Activated CD4-positive, alpha-beta T cell treated with anti-CD3 and anti-CD28 coated beads, Interleukin-2, amount 10 ng/mL, durations not matched to agents 7 days and 5 days (primary cell): ENCODE measurements at regions of chr7 and their contacts with region 1.

Region 1: DNA sequence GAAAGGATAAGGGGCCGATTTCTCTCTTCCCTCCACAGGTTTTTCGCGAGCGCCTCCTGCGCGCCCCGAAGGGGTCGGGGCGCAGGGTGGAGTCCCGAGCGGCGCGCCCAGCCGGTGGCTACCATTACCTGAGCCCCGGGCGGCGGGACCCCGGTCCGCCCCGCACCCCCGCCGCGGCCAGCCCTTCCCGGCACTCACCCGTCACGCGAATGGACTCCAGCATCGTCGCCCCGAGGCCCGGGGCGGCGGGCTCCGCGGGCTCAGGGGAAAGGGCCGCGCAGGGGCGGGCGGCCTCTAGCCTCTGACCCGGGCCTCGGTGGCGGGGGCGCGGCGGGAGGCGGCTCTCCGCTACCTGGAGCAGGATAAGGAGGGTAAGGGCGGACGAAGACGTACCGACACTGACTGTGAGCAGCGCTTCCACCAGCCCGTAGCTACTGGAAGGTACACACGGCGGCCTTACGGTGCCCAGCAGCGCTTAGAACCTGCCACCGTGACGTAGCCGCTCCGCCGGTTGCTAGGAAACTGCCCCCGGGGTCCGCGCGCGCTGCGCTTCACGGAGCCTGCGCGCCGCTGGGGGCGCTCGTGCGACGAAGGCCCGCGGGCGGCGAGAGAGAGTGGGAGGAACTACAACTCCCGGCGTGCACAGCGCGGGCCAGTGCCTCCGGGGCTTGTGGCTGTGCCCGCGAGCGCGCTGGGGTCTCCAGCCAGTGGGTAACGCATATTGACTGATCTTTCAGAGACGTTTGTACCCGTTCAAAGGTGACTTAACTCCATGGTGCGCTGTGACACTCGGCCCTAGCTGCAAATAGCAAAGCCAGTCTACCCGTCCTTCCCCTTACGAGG is 22.7 kb upstream of the ANLN start:
- DNase-seq: peak; percentile 91
- H3K4me3 Mint-ChIP-seq: peak overlapping the region; percentile 92
- H3K27ac Mint-ChIP-seq: peak overlapping the region; percentile 78
- H3K4me1 Mint-ChIP-seq: peaks cover 12% of the 10 kb centered on the region
- H3K27me3 Mint-ChIP-seq: peaks cover 43% of the 10 kb centered on the region

Region 2: GRCh38 chr7:35313575-35313974 is 1053.4 kb before region 1 on chr7:
- CTCF ChIA-PET with region 1: no interaction called
- POLR2A ChIA-PET with region 1: no interaction called
- DNase-seq: no peak
- H3K4me3 Mint-ChIP-seq: no peak overlapping the region
- H3K27ac Mint-ChIP-seq: no peak overlapping the region
- H3K4me1 Mint-ChIP-seq: no peaks in the 10 kb centered on the region
- H3K27me3 Mint-ChIP-seq: peaks cover 2% of the 10 kb centered on the region

Region 3: DNA sequence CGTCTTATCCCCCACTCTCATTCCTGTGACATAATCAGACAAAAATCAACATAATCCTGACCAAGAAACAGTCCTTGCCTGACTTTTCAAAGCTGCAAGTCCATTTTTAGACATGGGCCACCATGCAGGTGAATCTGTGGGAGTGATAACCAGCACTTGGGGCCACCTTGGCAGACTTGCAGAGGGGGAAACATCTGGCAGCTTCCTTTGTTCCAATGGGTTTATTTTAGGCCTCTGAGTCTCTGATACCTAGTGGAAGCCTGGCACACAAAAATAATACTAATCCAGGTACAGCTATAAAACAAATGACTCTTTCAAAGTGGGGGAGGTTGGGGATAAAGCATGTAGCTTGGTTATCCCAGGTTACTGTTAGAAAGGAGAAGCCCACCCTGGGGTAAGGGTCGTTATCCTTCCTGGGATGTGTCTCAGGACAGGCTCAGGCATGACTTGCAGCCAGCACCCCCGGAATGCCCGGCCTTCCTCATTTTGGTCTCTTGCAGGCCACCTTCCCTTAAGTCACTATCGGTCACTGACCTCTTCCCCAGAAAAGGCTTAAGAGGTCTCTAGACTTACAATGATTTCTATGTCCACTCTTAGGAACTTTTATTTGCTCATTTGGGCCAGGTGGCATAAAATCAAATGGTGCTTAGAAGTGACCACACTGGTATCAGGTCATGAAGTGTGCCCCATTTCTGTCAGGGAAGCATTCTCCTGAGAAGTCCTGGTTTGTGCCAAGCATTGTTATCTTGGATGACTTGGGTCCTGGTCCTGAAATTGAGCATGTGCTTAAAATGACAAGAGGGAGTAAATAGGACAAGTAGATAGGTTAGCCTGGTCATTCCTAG is 176.3 kb before region 1 on chr7:
- CTCF ChIA-PET with region 1: no interaction called
- POLR2A ChIA-PET with region 1: no interaction called
- DNase-seq: no peak
- H3K4me3 Mint-ChIP-seq: no peak overlapping the region
- H3K27ac Mint-ChIP-seq: no peak overlapping the region
- H3K4me1 Mint-ChIP-seq: no peaks in the 10 kb centered on the region
- H3K27me3 Mint-ChIP-seq: no peaks in the 10 kb centered on the region

Region 4: GRCh38 chr7:36314491-36314890 is 52.4 kb before region 1 on chr7:
- CTCF ChIA-PET with region 1: no interaction called
- POLR2A ChIA-PET with region 1: no interaction called
- DNase-seq: no peak
- H3K4me3 Mint-ChIP-seq: no peak overlapping the region
- H3K27ac Mint-ChIP-seq: no peak overlapping the region
- H3K4me1 Mint-ChIP-seq: peaks cover 2% of the 10 kb centered on the region
- H3K27me3 Mint-ChIP-seq: no peaks in the 10 kb centered on the region

Region 5: DNA sequence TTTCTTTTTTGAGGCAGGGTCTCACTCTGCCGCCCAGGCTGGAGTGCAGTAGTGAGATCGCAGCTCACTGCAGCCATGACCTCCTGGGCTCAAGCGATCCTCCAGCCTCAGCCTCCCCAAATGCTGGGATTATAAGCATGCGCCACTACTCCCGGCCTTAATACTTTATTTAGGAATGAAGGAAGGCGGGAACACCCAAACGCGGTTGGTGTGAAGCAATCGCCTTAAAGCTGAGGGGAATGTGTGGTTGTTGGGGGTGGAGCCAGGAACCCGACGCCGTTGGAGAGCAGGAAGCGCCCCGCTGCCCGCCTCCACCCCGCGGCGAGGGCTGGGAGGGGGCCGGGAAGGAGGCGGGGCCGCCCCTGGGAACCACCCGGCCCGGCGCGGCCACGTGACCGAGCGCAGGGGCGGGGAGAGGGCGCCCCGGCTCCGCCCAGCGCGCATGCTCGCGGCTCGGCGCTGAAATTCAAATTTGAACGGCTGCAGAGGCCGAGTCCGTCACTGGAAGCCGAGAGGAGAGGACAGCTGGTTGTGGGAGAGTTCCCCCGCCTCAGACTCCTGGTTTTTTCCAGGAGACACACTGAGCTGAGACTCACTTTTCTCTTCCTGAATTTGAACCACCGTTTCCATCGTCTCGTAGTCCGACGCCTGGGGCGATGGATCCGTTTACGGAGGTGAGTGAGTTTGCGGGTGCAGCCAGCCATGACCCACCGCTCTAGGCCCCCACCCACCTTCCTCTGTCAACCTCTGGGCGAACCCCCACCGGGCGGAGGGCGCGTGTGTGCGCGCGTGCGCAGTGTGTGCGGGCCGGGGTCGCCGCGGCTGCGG is 22.6 kb after region 1 on chr7 and contains the start of gene ANLN:
- CTCF ChIA-PET with region 1: interaction called, 10 read pairs
- POLR2A ChIA-PET with region 1: no interaction called
- DNase-seq: peak; percentile 84
- H3K4me3 Mint-ChIP-seq: peak within 1 kb of the TSS; percentile 82
- H3K27ac Mint-ChIP-seq: peak within 1 kb of the TSS; percentile 92
- H3K4me1 Mint-ChIP-seq: peaks cover 37% of the 10 kb centered on the region
- H3K27me3 Mint-ChIP-seq: peaks cover 8% of the 10 kb centered on the region
- total RNA-seq, gene ANLN: 87.9 to 100 TPM